Cardiac septum (tissue), 1 donor: ENCODE measurements at regions of chr1 and their contacts with region 1.

Region 1: DNA sequence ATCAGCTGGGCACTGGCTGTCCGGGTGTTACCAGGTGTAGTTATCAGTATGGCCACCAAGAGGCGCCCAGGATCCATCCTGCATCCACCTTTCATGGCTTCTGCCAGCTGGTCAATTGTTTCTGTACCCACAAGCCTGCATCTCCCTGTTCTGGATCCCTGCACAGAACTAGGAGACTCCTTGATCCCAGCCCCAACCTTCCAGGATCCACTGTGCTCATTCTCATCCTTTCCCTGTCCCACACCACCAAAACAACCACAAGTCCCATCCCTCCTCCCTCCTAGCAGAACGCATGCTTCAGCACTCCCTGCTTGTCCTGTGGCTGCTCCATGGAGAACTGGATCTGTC is 27.2 kb upstream of the FOXE3 start:
- DNase-seq: no peak

Region 2: DNA sequence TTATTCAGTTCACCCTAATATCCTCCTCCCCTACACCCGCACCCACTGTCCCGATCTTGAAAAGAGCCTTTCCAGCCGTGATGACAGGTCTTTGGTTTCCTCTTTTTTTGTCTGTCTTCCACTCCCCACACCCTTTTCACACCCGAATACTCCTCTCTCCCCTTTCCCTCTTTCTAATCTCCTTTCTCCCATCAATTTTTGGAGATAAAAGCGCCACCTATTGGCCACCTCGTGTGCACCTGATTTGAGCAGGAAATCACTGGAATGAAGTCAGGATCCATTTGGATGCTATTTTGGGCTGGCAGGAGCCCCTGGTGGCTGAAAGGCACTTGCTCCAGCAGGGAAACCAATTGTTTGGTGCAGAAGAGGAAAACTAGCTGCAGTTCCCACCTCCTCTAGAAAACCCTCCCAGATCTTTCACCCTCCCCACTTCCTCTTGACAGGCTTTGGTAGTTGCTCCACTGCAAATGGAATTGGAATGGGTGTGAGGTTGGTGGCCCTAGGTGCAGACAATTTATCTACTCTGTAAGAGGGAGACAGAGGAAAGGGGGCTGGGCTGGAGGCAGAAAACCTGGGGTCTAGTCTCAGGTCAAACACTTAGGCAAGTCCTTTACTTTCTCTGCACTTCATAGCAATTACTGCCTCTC is 35.6 kb after region 1 on chr1:
- intact Hi-C with region 1: loop called (anchors 2 kb)
- DNase-seq: no peak